ENCODE measurements at regions of chr17 and their contacts with region 1.

Region 1: GRCh38 chr17:45235416-45236281 is 14.0 kb downstream of the FMNL1 start:
- DNase-seq: peak; percentile 72 to 78 (median 73)
- H3K4me3 ChIP-seq: no peak overlapping the region
- H3K4me3 Mint-ChIP-seq: peak overlapping the region in 3 of 8 donors; percentile 17 to 63 (median 29)
- H3K27ac ChIP-seq: peak overlapping the region; percentile 57
- H3K27ac Mint-ChIP-seq: peak overlapping the region; percentile 88 to 99 (median 93)
- H3K4me1 ChIP-seq: peaks cover 54% of the 10 kb centered on the region
- H3K4me1 Mint-ChIP-seq: peaks cover 38 to 70% (median 53%) of the 10 kb centered on the region in 4 donors
- H3K27me3 ChIP-seq: no peaks in the 10 kb centered on the region
- H3K27me3 Mint-ChIP-seq: no peaks in the 10 kb centered on the region

Region 2: DNA sequence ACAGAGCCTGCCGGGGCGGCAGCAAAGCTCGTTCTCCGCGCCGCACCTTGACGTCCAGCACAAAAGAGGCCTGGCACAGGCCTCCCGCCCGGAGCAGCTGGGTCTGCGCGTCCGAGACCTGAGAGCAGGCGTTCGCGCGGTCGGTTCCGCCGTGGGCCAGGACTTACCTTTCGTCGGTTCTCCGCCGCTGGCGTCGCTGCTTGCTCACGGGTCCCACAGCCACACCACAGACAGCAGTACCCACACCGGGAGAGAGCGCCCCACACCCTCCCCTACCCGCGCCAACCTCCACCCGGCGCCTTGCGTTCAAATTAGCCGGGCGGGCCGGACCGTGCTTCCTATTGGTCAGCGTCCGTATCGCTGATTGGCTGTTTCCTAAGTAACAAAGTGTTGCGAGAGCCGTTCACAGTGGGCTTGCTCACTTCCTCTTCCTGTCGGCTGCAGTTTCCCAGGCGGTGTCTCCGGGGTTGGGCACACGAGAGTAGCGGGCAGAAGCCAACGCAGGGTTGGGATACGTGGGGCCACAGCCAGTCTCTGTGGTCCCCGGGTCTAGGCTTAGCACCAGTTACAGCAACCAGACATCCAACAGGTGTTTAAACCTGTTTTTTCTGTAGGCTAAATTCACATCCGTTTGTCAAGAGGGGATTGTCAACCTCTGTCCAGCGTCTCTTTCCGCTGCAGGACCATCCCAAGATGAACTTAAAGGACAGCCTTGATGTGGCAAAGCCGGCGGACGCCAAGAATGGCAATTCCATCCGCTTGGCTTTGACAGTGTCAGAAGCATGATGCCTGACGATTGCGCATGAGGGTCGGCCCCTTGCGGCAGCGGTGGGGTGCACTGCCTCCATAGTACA is 288.0 kb before region 1 on chr17 and contains the start of gene KIF18B:
- CTCF ChIA-PET with region 1: no interaction called
- POLR2A ChIA-PET with region 1: no interaction called
- intact Hi-C with region 1: no loop called
- DNase-seq: peak; percentile 86 to 90 (median 88)
- H3K4me3 ChIP-seq: peak within 1 kb of the TSS; percentile 74 to 80
- H3K4me3 Mint-ChIP-seq: peak within 1 kb of the TSS; percentile 90 to 98 (median 97)
- H3K27ac ChIP-seq: peak within 1 kb of the TSS; percentile 55
- H3K27ac Mint-ChIP-seq: peak within 1 kb of the TSS; percentile 77 to 98 (median 97)
- H3K4me1 ChIP-seq: peaks cover 19% of the 10 kb centered on the region
- H3K4me1 Mint-ChIP-seq: peaks cover 3 to 23% (median 14%) of the 10 kb centered on the region in 4 donors
- H3K27me3 ChIP-seq: no peaks in the 10 kb centered on the region
- H3K27me3 Mint-ChIP-seq: no peaks in the 10 kb centered on the region
- total RNA-seq, gene KIF18B: not detected

Region 3: GRCh38 chr17:45270828-45271418 is 35.3 kb after region 1 on chr17:
- CTCF ChIA-PET with region 1: interaction called, 20 read pairs
- POLR2A ChIA-PET with region 1: interaction called, 3 read pairs
- intact Hi-C with region 1: loop called (anchors 5 kb)
- DNase-seq: peak; percentile 38 to 60 (median 41)
- H3K4me3 ChIP-seq: no peak overlapping the region
- H3K4me3 Mint-ChIP-seq: no peak overlapping the region
- H3K27ac ChIP-seq: no peak overlapping the region
- H3K27ac Mint-ChIP-seq: peak overlapping the region in 4 of 7 donors; percentile 22 to 31 (median 26)
- H3K4me1 ChIP-seq: no peaks in the 10 kb centered on the region
- H3K4me1 Mint-ChIP-seq: no peaks in the 10 kb centered on the region
- H3K27me3 ChIP-seq: no peaks in the 10 kb centered on the region
- H3K27me3 Mint-ChIP-seq: no peaks in the 10 kb centered on the region

Measured in CD4-positive, alpha-beta memory T cell (primary cell).